Sigmoid colon (tissue), 7 donors: ENCODE measurements at regions of chr1 and their contacts with region 1.

Region 1: GRCh38 chr1:203273206-203273868 is 32.0 kb upstream of the BTG2 start:
- DNase-seq: peak; percentile 95
- H3K4me3 ChIP-seq: peak overlapping the region in 3 of 4 donors; percentile 19 to 31 (median 30)
- H3K27ac ChIP-seq: peak overlapping the region; percentile 86 to 98 (median 92)
- H3K4me1 ChIP-seq: peaks cover 0 to 74% (median 59%) of the 10 kb centered on the region in 4 donors
- H3K27me3 ChIP-seq: no peaks in the 10 kb centered on the region
- CTCF ChIP-seq: peak; percentile 98 to 100 (median 99)
- EP300 ChIP-seq: no peak
- POLR2A ChIP-seq: no peak

Region 2: DNA sequence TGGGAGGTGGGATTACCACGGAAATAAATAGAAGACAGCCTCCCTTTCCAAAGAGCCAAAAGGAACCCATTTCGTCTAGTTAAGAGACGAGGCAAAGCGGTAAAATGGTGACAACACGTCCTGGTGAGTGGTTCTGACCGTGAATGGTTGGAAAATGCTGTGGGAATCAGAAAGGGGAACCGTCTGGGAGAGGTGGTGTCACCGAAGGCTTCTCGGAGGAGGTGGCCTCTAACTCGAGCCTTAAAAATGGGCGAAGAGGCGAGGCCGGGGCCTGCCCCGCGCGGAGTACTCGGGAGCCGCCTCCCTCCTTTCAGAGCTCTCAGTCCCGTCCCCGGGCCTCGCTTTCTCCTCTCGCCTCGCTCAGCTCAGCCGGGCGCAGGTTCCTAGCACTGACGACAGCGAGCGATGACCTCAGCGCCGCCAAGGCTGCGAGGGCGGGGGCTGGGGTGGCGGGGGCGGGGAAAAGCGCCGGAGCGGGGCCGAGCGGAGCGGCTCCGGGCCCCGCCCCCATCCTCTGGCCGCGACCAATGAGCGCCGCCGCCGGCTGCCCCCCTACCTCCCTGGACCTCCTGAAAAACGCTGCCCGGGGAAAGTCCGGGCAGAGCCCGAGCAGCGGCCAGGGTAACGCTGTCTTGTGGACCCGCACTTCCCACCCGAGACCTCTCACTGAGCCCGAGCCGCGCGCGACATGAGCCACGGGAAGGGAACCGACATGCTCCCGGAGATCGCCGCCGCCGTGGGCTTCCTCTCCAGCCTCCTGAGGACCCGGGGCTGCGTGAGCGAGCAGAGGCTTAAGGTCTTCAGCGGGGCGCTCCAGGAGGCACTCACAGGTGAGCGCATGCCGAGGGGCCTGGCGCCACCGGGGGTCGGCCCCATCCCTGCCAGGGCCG is 31.8 kb after region 1 on chr1 and contains the start of gene BTG2:
- intact Hi-C with region 1: loop called (anchors 1 kb)
- DNase-seq: peak; percentile 98
- H3K4me3 ChIP-seq: peak within 1 kb of the TSS; percentile 95 to 99 (median 98)
- H3K27ac ChIP-seq: peak within 1 kb of the TSS; percentile 96 to 100 (median 100)
- H3K4me1 ChIP-seq: peaks cover 0 to 43% (median 38%) of the 10 kb centered on the region in 4 donors
- H3K27me3 ChIP-seq: no peaks in the 10 kb centered on the region
- CTCF ChIP-seq: no peak
- EP300 ChIP-seq: peak in 1 of 4 donors; percentile 20
- POLR2A ChIP-seq: peak; percentile 100
- total RNA-seq, gene BTG2: 66.0 to 397 (median 180) TPM

Region 3: GRCh38 chr1:203340112-203340804 is 66.9 kb after region 1 on chr1:
- intact Hi-C with region 1: loop called (anchors 1 kb)
- DNase-seq: peak; percentile 89
- H3K4me3 ChIP-seq: no peak overlapping the region
- H3K27ac ChIP-seq: no peak overlapping the region
- H3K4me1 ChIP-seq: peaks cover 0 to 15% (median 7%) of the 10 kb centered on the region in 4 donors
- H3K27me3 ChIP-seq: no peaks in the 10 kb centered on the region
- CTCF ChIP-seq: peak; percentile 82 to 90 (median 86)
- EP300 ChIP-seq: no peak
- POLR2A ChIP-seq: no peak

Region 4: GRCh38 chr1:203463469-203464062 is 190.2 kb after region 1 on chr1:
- intact Hi-C with region 1: loop called (anchors 1 kb)
- DNase-seq: no peak
- H3K4me3 ChIP-seq: no peak overlapping the region
- H3K27ac ChIP-seq: peak overlapping the region; percentile 89 to 95 (median 94)
- H3K4me1 ChIP-seq: peaks cover 0 to 68% (median 60%) of the 10 kb centered on the region in 4 donors
- H3K27me3 ChIP-seq: no peaks in the 10 kb centered on the region
- CTCF ChIP-seq: peak in 3 of 4 experiments; percentile 14 to 44 (median 40)
- EP300 ChIP-seq: no peak
- POLR2A ChIP-seq: no peak

Region 5: GRCh38 chr1:203702130-203702577 is 428.8 kb after region 1 on chr1:
- intact Hi-C with region 1: loop called (anchors 10 kb)
- DNase-seq: peak; percentile 76
- H3K4me3 ChIP-seq: no peak overlapping the region
- H3K27ac ChIP-seq: peak overlapping the region; percentile 87 to 93 (median 88)
- H3K4me1 ChIP-seq: peaks cover 0 to 77% (median 65%) of the 10 kb centered on the region in 4 donors
- H3K27me3 ChIP-seq: no peaks in the 10 kb centered on the region
- CTCF ChIP-seq: peak; percentile 78 to 97 (median 94)
- EP300 ChIP-seq: no peak
- POLR2A ChIP-seq: no peak